PC-9 (cell line): ENCODE measurements at regions of chr11 and their contacts with region 1.

Region 1: GRCh38 chr11:36088266-36088972 is 144.6 kb downstream of the LDLRAD3 start:
- DNase-seq: no peak
- H3K4me3 ChIP-seq: no peak overlapping the region
- H3K27ac ChIP-seq: no peak overlapping the region
- H3K4me1 ChIP-seq: no peaks in the 10 kb centered on the region
- H3K27me3 ChIP-seq: no peaks in the 10 kb centered on the region
- CTCF ChIP-seq: no peak

Region 2: GRCh38 chr11:36104660-36104992 is 16.2 kb after region 1 on chr11:
- CTCF ChIA-PET with region 1: interaction called, 6 read pairs
- POLR2A ChIA-PET with region 1: interaction called, 11 read pairs
- intact Hi-C with region 1: no loop called
- DNase-seq: no peak
- H3K4me3 ChIP-seq: no peak overlapping the region
- H3K27ac ChIP-seq: no peak overlapping the region
- H3K4me1 ChIP-seq: no peaks in the 10 kb centered on the region
- H3K27me3 ChIP-seq: no peaks in the 10 kb centered on the region
- CTCF ChIP-seq: no peak

Region 3: GRCh38 chr11:36109850-36110606 is 21.6 kb after region 1 on chr11:
- CTCF ChIA-PET with region 1: no interaction called
- POLR2A ChIA-PET with region 1: interaction called, 11 read pairs
- intact Hi-C with region 1: no loop called
- DNase-seq: no peak
- H3K4me3 ChIP-seq: no peak overlapping the region
- H3K27ac ChIP-seq: no peak overlapping the region
- H3K4me1 ChIP-seq: no peaks in the 10 kb centered on the region
- H3K27me3 ChIP-seq: no peaks in the 10 kb centered on the region
- CTCF ChIP-seq: no peak